Colonic mucosa (tissue), 4 donors: ENCODE measurements at regions of chr5 and their contacts with region 1.

Region 1: DNA sequence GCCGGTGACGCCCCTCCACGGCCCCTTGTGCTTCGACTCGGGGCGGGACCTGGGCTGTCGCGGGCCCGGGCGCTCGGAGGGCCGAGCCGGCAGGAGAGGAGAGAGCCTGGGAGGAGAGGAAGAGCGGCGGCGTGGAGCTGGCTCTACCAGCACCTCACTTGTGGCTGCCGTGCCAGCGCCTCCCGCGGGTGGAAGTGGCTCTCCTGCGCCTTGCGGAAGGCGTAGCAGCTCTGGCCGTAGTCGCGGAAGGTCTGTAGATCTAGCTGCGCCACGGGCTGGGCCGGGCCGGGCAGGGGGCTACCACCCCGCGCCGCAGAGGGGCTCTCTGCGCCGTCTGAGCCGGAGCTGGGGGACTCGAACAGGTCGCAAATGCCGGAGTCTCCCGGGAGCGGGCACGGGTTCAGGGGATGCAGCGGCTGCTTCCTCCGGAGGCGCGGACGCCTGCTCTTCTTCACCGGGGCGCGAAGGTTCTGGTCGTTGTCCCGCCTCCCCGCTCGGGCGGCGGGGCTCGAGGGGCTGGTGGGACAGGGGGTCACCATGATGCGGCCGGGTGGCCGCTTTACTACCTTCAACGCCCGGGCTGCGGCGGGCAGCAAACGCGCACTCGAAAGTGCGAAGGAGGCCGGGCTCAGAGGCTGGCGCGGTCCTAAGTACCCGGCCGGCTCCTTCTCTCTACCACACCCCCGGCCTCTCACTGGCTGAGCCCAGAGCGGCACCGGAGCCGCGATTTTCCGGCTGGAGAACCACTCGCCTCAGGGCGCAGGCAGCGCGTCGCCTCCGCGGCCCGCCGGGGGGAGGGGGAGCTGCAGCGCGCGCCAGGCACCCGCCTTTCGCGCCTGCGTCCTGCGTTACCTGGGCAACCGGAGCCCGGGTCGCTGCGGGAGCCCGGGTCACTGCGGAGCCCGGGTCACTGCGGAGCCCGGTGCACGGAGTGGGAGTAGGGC is at the start of gene CCNO:
- DNase-seq: peak; percentile 82
- H3K4me3 ChIP-seq: peak within 1 kb of the TSS; percentile 59
- H3K27ac ChIP-seq: peak within 1 kb of the TSS; percentile 52
- H3K4me1 ChIP-seq: peaks cover 28% of the 10 kb centered on the region
- H3K27me3 ChIP-seq: peaks cover 59% of the 10 kb centered on the region
- CTCF ChIP-seq: no peak
- total RNA-seq, gene CCNO: 2.5 to 2.6 TPM

Region 2: DNA sequence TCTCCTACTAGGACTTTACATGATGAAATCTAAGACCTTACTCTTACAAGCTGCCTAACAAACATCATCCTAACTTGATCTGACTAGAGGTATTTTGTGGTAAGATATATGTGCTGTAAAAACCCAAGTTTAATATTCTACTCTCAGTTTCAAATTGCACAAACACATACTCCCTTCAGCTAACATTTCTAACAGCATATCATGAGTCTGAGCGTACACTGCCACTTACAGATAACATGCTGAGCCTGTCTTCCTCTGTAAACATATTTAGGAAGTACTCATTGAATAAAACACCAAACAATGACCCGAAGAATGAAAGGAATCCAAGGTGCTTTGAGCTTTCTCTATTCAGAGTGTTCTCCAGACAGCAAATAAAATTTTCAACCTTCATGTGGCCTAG is 239.9 kb before region 1 on chr5:
- intact Hi-C with region 1: no loop called
- DNase-seq: no peak
- H3K4me3 ChIP-seq: no peak overlapping the region
- H3K27ac ChIP-seq: no peak overlapping the region
- H3K4me1 ChIP-seq: no peaks in the 10 kb centered on the region
- H3K27me3 ChIP-seq: no peaks in the 10 kb centered on the region
- CTCF ChIP-seq: no peak

Region 3: DNA sequence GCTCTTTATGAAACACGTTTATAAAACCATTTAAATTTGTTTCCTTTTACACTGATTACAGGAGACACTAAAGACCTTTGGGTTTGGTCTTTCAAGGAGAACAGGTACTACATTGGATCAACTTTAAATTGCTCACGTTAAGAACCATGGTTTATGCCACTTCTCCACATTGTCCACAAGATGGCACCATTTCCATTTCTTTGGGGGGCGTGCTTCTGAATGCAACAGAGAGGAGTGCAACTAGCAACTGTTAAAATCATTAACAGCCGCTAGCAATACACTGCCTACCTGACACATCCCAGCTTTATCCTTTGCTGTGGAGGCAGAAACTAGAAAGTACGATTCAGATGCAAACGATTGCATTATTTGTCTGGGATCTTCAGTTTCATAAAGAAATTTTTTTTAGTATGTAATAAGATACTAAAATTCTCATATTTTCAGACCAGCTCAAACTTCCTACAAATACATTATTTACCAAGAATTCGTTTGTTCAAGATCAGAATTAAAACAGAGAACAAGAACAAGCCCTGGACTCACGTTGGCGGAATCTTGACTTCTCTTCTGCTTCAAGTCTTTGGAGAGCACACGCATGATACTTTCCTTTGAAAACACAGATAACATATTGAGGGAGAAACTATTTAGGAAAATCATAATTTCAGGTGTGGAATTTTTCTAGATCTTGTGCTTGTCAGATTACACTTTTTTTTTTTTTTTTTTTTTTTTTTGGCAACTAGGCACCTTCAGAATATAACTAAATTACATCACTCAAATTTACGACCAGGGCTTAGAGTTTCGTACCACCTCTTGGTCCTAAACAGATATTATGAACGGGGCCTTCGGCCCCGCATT is 61.0 kb before region 1 on chr5:
- intact Hi-C with region 1: loop called (anchors 5 kb)
- DNase-seq: peak; percentile 64
- H3K4me3 ChIP-seq: peak overlapping the region; percentile 42
- H3K27ac ChIP-seq: no peak overlapping the region
- H3K4me1 ChIP-seq: peaks cover 10% of the 10 kb centered on the region
- H3K27me3 ChIP-seq: peaks cover 30% of the 10 kb centered on the region
- CTCF ChIP-seq: peak; percentile 87

Region 4: DNA sequence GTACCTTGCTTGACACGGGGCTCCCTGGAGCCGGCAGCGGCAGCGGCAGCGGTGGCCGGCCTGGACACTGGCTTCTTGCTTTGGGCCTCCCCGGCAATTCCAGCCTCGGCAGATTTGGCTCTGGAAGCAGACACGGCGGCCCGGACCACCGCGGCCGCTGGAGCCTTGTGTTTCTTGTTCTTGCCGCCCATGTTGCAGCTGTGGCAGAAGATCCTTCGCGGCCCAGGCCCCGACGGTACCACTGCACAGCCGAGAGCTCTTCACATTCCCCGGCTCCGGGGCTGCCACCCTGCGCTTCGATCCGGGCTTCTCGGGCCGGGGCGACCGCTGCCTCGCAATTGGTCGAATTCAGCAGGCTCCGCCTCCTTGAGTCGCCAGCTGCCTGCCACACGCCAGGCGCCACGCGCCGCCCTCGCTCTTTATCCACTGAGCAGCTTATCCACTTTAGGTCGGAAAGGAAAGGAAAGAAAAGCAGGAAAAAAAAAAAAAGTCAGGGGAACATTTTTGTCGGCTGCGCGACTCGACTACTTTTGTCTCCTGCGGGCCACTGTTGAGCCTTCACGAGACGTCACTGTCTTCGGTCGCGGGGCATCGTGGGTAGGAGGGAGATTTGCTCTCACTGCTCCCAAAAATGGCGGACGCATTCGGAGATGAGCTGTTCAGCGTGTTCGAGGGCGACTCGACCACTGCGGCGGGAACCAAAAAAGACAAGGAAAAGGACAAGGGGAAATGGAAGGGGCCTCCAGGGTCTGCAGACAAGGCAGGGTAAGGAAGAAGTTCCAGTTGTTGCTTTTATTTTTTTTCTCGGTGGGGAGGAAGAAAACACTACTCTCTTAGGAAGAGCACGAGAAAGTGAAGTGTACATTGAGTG is 74.4 kb after region 1 on chr5 and contains the starts of genes DHX29 and MTREX:
- intact Hi-C with region 1: loop called (anchors 5 kb)
- DNase-seq: peak; percentile 93
- H3K4me3 ChIP-seq: peak within 1 kb of the TSS; percentile 78
- H3K27ac ChIP-seq: peak within 1 kb of the TSS; percentile 92
- H3K4me1 ChIP-seq: peaks cover 11% of the 10 kb centered on the region
- H3K27me3 ChIP-seq: no peaks in the 10 kb centered on the region
- CTCF ChIP-seq: no peak
- total RNA-seq, gene DHX29: 20.8 to 24.6 TPM
- total RNA-seq, gene MTREX: 53.7 to 69.0 TPM